ENCODE measurements at regions of chr2 and their contacts with region 1.

Region 1: DNA sequence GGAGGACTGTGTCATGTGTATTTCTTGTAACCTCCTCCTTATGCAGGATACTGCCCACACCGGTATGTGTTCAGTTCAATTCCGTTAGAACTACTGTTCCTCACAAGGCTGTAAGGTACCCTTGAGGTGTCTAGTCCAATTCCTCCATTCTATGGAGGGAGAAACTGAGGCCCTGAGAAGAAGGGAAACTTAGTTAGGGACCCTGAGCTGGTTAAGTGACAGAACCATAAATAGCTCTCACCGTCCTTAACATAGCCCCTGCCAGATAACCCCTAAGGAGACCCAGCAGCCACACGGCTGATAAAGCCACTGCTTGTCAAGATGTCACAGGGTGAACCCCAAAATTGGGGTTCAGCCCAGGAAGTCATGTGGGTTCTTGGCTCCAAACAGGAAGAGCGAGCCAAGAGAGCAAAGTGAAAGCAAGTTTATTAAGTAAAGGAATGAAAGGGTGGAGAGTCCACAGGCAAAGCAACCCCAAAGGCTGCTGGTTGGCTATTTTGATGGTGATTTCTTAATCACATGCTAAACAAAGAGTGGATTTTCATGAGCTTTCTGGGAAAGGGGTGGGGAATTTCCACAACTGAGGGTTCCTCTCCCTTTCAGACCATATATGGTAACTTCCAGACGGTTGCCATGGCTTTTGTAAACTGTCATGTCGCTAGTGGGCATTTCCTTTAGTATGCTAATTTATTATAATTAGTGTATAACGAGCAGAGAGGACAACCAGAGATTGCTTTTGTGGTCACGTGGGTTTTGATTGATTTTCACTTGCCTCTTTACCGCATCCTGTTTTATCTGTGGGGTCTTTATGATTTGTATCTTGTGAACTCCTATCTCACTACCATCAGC is 83.4 kb upstream of the RTN4 start:
- DNase-seq: peak in 1 of 2 experiments; percentile 78
- H3K4me3 ChIP-seq: peak overlapping the region in 3 of 4 experiments; percentile 2 to 40 (median 36); a peak in 3 of 8 replicates
- H3K27ac ChIP-seq: peak overlapping the region; percentile 97
- H3K4me1 ChIP-seq: peaks cover 12 to 27% (median 24%) of the 10 kb centered on the region in 4 experiments
- H3K27me3 ChIP-seq: no peaks in the 10 kb centered on the region
- CTCF ChIP-seq: no peak
- EP300 ChIP-seq: peak in 1 of 2 experiments; percentile 95; a peak in 1 of 3 replicates
- POLR2A ChIP-seq: peak; percentile 41 to 81
- RAD21 ChIP-seq: 0 out of 4 replicates have a peak, but pooled peaks of 1 of the 2 experiments have one; percentile 3

Region 2: DNA sequence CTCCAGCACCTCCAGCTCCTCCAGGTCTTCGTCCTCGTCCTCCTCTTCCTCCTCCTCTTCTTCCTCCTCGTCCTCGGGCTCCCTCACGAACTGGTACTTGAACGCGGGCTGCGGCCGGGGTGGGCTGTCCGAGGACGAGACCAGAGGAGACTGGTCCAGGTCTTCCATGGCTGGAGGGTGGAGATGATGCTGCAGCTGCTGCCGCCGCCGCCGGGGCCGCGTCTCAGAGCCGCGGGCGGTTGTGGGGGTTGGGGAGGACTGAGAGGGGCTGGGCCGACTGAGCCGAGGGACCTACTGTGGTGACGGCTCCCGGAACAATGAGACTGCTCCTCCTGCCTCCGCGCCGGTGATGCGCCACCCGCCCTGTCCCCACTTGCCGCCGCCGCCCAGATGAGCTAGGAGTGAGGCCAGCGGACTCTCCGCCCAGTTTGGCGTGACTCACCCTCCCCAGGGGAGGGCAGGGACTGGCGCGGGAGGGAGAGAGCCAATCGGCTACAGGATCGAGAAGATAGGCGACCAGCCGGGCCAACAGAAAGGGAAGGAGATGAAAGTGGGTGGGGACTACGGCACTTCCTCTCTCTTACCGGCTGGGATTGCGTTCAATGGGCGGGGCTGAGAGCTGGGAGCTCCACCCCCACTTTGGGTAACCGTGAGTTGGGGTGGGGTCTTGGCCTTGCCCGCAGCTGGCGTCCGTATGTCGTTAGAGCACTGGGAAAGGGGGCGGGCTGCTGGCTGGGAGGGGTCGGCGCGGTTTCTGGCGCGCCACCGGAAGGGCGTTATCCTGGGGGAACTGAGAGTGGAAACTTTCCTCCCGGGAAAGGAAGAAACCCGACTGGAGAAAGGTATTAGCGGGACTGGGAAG is 83.3 kb before region 1 on chr2 and contains the start of gene RTN4:
- CTCF ChIA-PET with region 1: interaction called, 6 read pairs
- POLR2A ChIA-PET with region 1: interaction called, 21 read pairs
- DNase-seq: peak; percentile 97 to 99
- H3K4me3 ChIP-seq: peak within 1 kb of the TSS; percentile 82 to 100 (median 94)
- H3K27ac ChIP-seq: peak within 1 kb of the TSS; percentile 98
- H3K4me1 ChIP-seq: peaks cover 0 to 10% (median 5%) of the 10 kb centered on the region in 4 experiments; a peak in 3 of 7 replicates
- H3K27me3 ChIP-seq: no peaks in the 10 kb centered on the region
- CTCF ChIP-seq: no peak
- EP300 ChIP-seq: peak in 1 of 2 experiments; percentile 57; a peak in 1 of 3 replicates
- POLR2A ChIP-seq: peak; percentile 95 to 97
- RAD21 ChIP-seq: no peak
- total RNA-seq, gene RTN4: 240 and 242 TPM in 2 replicates

Region 3: GRCh38 chr2:55120634-55121359 is 12.9 kb before region 1 on chr2:
- CTCF ChIA-PET with region 1: interaction called, 5 read pairs
- POLR2A ChIA-PET with region 1: interaction called, 16 read pairs
- DNase-seq: no peak
- H3K4me3 ChIP-seq: no peak overlapping the region
- H3K27ac ChIP-seq: no peak overlapping the region
- H3K4me1 ChIP-seq: peaks cover 2 to 9% (median 6%) of the 10 kb centered on the region in 4 experiments; a peak in 5 of 7 replicates
- H3K27me3 ChIP-seq: no peaks in the 10 kb centered on the region
- CTCF ChIP-seq: no peak
- EP300 ChIP-seq: no peak
- POLR2A ChIP-seq: no peak
- RAD21 ChIP-seq: no peak

Region 4: GRCh38 chr2:55148269-55148668 is 14.6 kb after region 1 on chr2:
- CTCF ChIA-PET with region 1: interaction called, 4 read pairs
- POLR2A ChIA-PET with region 1: interaction called, 11 read pairs
- DNase-seq: no peak
- H3K4me3 ChIP-seq: no peak overlapping the region
- H3K27ac ChIP-seq: no peak overlapping the region
- H3K4me1 ChIP-seq: no peaks in the 10 kb centered on the region
- H3K27me3 ChIP-seq: no peaks in the 10 kb centered on the region
- CTCF ChIP-seq: no peak
- EP300 ChIP-seq: no peak
- POLR2A ChIP-seq: no peak
- RAD21 ChIP-seq: no peak